Endothelial cell of umbilical vein (primary cell): ENCODE measurements at regions of chr6 and their contacts with region 1.

Region 1: DNA sequence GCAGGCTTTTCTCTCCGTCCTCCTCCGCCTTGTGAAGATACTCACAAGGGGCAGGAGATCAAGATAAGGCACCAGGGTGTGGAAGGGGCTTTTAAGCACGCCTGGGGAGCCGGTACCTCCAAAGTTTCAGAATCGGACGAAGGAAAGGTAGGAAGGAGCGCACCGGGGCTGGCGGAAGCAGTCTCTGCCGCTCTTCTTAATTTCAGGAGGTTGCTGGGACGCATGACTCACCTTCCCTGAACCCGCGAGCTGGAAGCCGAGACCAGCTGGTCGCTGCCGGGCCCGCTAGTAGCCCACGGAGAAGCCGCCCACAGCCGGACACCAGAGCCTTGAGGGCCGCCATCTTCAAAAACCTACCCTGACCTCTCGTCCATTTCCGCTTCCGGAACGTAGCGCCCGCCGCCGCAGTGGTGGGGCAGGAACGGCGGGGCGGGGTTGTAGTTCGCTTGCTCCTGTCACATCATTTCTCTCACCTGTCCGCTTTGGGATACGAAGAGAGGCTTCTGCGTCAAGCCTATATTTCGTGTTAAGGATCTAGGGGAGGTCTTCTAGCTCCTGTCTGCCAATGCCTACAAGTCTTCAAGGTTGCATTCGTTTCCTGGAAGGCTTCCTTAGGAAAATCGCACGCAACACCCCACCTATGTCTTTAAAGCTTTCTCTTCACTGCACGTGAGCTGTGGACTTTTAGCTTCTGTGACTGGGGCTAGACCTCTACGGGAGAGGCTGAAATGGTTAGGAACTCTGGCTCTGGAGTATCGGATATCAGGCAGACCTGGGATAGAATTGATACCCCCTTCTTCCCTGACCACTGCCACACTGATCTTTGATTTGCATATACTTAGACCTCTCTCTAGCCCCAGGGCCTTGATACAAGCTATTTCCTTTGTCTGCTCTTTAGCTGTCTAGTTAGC is at the start of gene MRPS18A:
- DNase-seq: peak; percentile 71
- H3K4me3 ChIP-seq: peak within 1 kb of the TSS; percentile 45 to 95 (median 64)
- H3K27ac ChIP-seq: peak within 1 kb of the TSS; percentile 64
- H3K4me1 ChIP-seq: peaks cover 13% of the 10 kb centered on the region
- H3K27me3 ChIP-seq: no peaks in the 10 kb centered on the region
- CTCF ChIP-seq: no peak
- POLR2A ChIP-seq: peak; percentile 92
- total RNA-seq, gene MRPS18A: 39.1 and 39.8 TPM in 2 replicates

Region 2: DNA sequence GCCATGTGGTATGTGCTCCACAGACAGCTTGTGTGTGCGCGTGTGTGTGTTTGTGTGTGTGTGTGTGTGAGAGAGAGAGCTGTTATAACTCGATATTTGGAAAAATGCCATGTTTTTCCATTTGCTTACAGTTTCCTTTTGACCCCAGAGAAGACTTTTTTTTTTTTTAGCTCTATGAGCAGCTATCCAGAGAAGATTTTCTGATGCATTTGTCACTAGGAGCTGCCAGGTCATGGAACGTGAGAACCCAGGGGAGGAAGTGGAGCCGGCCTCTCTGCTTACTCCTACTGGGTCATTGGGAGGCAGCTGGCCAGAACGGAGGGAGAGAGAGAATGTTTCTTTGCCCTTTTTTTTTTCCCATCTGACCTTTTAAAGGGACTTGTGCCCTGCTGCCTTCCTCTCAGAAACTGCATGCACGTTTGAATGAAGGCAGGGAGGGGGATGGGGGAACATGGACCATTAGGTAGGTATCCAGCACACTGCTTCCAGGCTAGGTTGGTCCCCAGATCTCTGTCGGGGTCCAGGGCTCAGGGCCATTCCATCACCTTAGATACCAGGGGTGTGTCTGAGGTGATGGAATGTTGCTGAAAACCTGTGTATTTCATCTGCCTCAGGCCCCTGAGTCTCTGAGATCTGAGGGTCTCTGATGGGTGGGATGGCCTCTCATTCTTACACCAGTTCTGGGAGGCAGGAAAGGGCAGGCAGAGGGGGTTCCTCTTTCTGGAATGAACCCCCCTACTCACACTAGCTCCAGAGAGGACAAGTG is 11.1 kb after region 1 on chr6:
- CTCF ChIA-PET with region 1: interaction called, 3 read pairs
- POLR2A ChIA-PET with region 1: interaction called, 4 read pairs
- dilution Hi-C with region 1: no loop called
- intact Hi-C with region 1: loop called (anchors 1 kb)
- DNase-seq: peak; percentile 91
- H3K4me3 ChIP-seq: no peak overlapping the region
- H3K27ac ChIP-seq: peak overlapping the region; percentile 75
- H3K4me1 ChIP-seq: peaks cover 43% of the 10 kb centered on the region
- H3K27me3 ChIP-seq: no peaks in the 10 kb centered on the region
- CTCF ChIP-seq: no peak
- POLR2A ChIP-seq: no peak